GM12878 (cell line): ENCODE measurements at regions of chr2 and their contacts with region 1.

Region 1: GRCh38 chr2:190693533-190694232 is 44.8 kb downstream of the NAB1 start:
- DNase-seq: no peak
- ATAC-seq: peak; percentile 71
- H3K4me3 ChIP-seq: no peak overlapping the region
- H3K27ac ChIP-seq: peak overlapping the region; percentile 46
- H3K4me1 ChIP-seq: peaks cover 18% of the 10 kb centered on the region
- H3K27me3 ChIP-seq: no peaks in the 10 kb centered on the region
- CTCF ChIP-seq: no peak
- EP300 ChIP-seq: peak; percentile 13 to 58; a peak in 3 of 4 replicates
- POLR2A ChIP-seq: no peak
- RAD21 ChIP-seq: no peak

Region 2: DNA sequence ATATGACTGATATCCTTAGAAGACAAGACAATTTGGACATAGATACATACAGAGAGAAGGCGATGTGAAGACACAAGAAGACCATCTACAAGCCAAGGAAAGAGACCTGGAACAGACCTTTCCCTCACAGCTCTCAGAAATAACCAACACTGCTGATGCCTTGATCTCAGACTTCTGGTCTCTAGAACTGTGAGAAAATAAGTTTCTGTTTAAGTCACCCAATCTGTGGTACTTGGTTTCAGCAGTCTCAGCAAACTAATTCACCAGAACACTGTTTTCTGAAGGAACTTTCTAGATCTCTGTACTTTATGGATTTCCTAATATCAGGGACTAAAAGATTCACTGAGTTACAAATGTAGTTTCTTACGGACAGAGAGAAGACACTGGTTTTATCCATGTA is 14.0 kb after region 1 on chr2:
- CTCF ChIA-PET with region 1: interaction called, 13 read pairs
- POLR2A ChIA-PET with region 1: interaction called, 17 read pairs
- RAD21 ChIA-PET with region 1: interaction called, 44 read pairs
- SMC1A ChIA-PET with region 1: interaction called, 53 read pairs
- in situ Hi-C with region 1: no loop called
- intact Hi-C with region 1: no loop called
- DNase-seq: no peak
- ATAC-seq: peak; percentile 66
- H3K4me3 ChIP-seq: no peak overlapping the region
- H3K27ac ChIP-seq: no peak overlapping the region
- H3K4me1 ChIP-seq: peaks cover 30% of the 10 kb centered on the region
- H3K27me3 ChIP-seq: no peaks in the 10 kb centered on the region
- CTCF ChIP-seq: no peak
- EP300 ChIP-seq: no peak
- POLR2A ChIP-seq: no peak
- RAD21 ChIP-seq: no peak

Region 3: GRCh38 chr2:190863946-190864345 is 170.3 kb after region 1 on chr2:
- CTCF ChIA-PET with region 1: no interaction called
- POLR2A ChIA-PET with region 1: no interaction called
- RAD21 ChIA-PET with region 1: no interaction called
- SMC1A ChIA-PET with region 1: no interaction called
- in situ Hi-C with region 1: no loop called
- intact Hi-C with region 1: no loop called
- DNase-seq: no peak
- ATAC-seq: no peak
- H3K4me3 ChIP-seq: no peak overlapping the region
- H3K27ac ChIP-seq: no peak overlapping the region
- H3K4me1 ChIP-seq: no peaks in the 10 kb centered on the region
- H3K27me3 ChIP-seq: no peaks in the 10 kb centered on the region
- CTCF ChIP-seq: no peak
- EP300 ChIP-seq: no peak
- POLR2A ChIP-seq: no peak
- RAD21 ChIP-seq: no peak